Calu3 (cell line): ENCODE measurements at regions of chr3 and their contacts with region 1.

Region 1: GRCh38 chr3:194536871-194537637 is 50.3 kb upstream of the ATP13A3 start:
- DNase-seq: peak; percentile 84
- H3K4me3 Mint-ChIP-seq: peak overlapping the region; percentile 33
- H3K27ac Mint-ChIP-seq: peak overlapping the region; percentile 80
- H3K4me1 Mint-ChIP-seq: peaks cover 41% of the 10 kb centered on the region
- H3K27me3 Mint-ChIP-seq: no peaks in the 10 kb centered on the region
- CTCF ChIP-seq: no peak

Region 2: DNA sequence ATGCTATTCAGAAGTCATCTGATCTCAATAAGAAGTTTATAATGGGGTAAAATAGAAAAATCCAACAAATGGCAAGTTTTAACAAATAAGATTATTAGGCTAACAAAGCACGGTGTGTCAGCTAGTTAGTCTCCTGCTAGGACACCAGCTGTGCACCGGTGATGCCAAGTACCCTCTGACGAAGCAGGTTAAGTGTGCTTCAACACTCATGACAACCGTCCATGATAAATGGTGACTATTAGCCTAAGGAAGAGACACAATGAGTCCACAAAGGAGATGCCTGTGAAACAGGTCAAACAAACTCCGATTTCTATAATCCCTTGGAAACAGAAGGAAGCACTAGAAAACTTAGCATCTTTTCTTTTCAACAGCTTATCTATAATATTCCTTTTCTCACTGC is 86.7 kb before region 1 on chr3:
- CTCF ChIA-PET with region 1: no interaction called
- intact Hi-C with region 1: no loop called
- DNase-seq: no peak
- H3K4me3 Mint-ChIP-seq: no peak overlapping the region
- H3K27ac Mint-ChIP-seq: no peak overlapping the region
- H3K4me1 Mint-ChIP-seq: peaks cover 15% of the 10 kb centered on the region
- H3K27me3 Mint-ChIP-seq: no peaks in the 10 kb centered on the region
- CTCF ChIP-seq: no peak

Region 3: DNA sequence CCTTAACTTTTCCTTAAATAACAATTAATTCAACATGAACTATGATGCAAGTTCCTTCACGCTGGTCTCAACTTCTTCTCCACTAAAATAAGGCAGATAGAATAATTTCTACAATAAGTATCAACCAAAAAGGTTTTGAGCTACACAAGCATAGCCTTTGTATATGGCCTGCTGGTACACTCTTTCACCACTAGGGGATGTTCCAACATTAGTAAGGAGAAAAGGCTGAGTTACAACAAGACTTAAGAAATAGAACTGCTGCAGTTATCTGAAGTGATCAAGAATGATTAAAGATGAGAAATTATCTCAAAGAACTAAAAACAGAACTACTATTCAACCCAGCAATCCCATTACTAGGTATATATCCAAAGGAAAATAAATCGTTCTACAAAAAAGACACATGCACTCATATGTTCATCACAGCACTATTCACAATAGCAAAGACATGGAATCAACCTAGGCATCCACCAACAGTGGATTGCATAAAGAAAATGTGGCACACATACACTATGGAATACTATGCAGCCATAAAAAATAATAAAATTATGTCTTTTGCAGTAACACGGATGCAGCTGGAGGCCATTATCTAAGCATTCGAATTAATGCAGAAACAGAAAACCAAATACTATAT is 64.6 kb before region 1 on chr3:
- CTCF ChIA-PET with region 1: interaction called, 4 read pairs
- intact Hi-C with region 1: loop called (anchors 5 kb)
- DNase-seq: peak; percentile 49
- H3K4me3 Mint-ChIP-seq: no peak overlapping the region
- H3K27ac Mint-ChIP-seq: no peak overlapping the region
- H3K4me1 Mint-ChIP-seq: peaks cover 9% of the 10 kb centered on the region
- H3K27me3 Mint-ChIP-seq: no peaks in the 10 kb centered on the region
- CTCF ChIP-seq: peak; percentile 87

Region 4: GRCh38 chr3:194497821-194498598 is 39.0 kb before region 1 on chr3:
- CTCF ChIA-PET with region 1: interaction called, 3 read pairs
- intact Hi-C with region 1: loop called (anchors 2 kb)
- DNase-seq: no peak
- H3K4me3 Mint-ChIP-seq: no peak overlapping the region
- H3K27ac Mint-ChIP-seq: no peak overlapping the region
- H3K4me1 Mint-ChIP-seq: peaks cover 42% of the 10 kb centered on the region
- H3K27me3 Mint-ChIP-seq: no peaks in the 10 kb centered on the region
- CTCF ChIP-seq: no peak

Region 5: GRCh38 chr3:194573691-194574437 is 36.8 kb after region 1 on chr3:
- CTCF ChIA-PET with region 1: interaction called, 15 read pairs
- intact Hi-C with region 1: loop called (anchors 2 kb)
- DNase-seq: peak; percentile 69
- H3K4me3 Mint-ChIP-seq: no peak overlapping the region
- H3K27ac Mint-ChIP-seq: no peak overlapping the region
- H3K4me1 Mint-ChIP-seq: peaks cover 70% of the 10 kb centered on the region
- H3K27me3 Mint-ChIP-seq: no peaks in the 10 kb centered on the region
- CTCF ChIP-seq: peak; percentile 78